ENCODE measurements at regions of chr4 and their contacts with region 1.

Region 1: GRCh38 chr4:75673027-75673958 is at the start of gene G3BP2:
- DNase-seq: peak; percentile 93 to 97
- H3K4me3 ChIP-seq: peak within 1 kb of the TSS; percentile 92 to 99 (median 94)
- H3K27ac ChIP-seq: peak within 1 kb of the TSS; percentile 94
- H3K4me1 ChIP-seq: peaks cover 6 to 11% (median 7%) of the 10 kb centered on the region in 4 experiments
- H3K27me3 ChIP-seq: no peaks in the 10 kb centered on the region
- CTCF ChIP-seq: no peak
- EP300 ChIP-seq: no peak
- POLR2A ChIP-seq: peak; percentile 75 to 95
- RAD21 ChIP-seq: no peak
- total RNA-seq, gene G3BP2: 378 and 388 TPM in 2 replicates

Region 2: GRCh38 chr4:75605928-75606327 is 67.4 kb before region 1 on chr4:
- CTCF ChIA-PET with region 1: no interaction called
- POLR2A ChIA-PET with region 1: no interaction called
- DNase-seq: no peak
- H3K4me3 ChIP-seq: no peak overlapping the region
- H3K27ac ChIP-seq: no peak overlapping the region
- H3K4me1 ChIP-seq: no peaks in the 10 kb centered on the region
- H3K27me3 ChIP-seq: no peaks in the 10 kb centered on the region
- CTCF ChIP-seq: no peak
- EP300 ChIP-seq: no peak
- POLR2A ChIP-seq: no peak
- RAD21 ChIP-seq: no peak

Region 3: GRCh38 chr4:75708218-75708691 is 35.0 kb after region 1 on chr4:
- CTCF ChIA-PET with region 1: interaction called, 6 read pairs
- POLR2A ChIA-PET with region 1: interaction called, 16 read pairs
- DNase-seq: peak in 1 of 2 experiments; percentile 50
- H3K4me3 ChIP-seq: no peak overlapping the region
- H3K27ac ChIP-seq: peak overlapping the region; percentile 8; the same call in 1 of the 2 replicates
- H3K4me1 ChIP-seq: peaks cover 8 to 16% (median 12%) of the 10 kb centered on the region in 4 experiments; a peak in 6 of 7 replicates
- H3K27me3 ChIP-seq: no peaks in the 10 kb centered on the region
- CTCF ChIP-seq: peak in 2 of 3 experiments; percentile 63 to 75; a peak in 3 of 4 replicates
- EP300 ChIP-seq: no peak
- POLR2A ChIP-seq: no peak
- RAD21 ChIP-seq: peak; percentile 74 to 78

Region 4: DNA sequence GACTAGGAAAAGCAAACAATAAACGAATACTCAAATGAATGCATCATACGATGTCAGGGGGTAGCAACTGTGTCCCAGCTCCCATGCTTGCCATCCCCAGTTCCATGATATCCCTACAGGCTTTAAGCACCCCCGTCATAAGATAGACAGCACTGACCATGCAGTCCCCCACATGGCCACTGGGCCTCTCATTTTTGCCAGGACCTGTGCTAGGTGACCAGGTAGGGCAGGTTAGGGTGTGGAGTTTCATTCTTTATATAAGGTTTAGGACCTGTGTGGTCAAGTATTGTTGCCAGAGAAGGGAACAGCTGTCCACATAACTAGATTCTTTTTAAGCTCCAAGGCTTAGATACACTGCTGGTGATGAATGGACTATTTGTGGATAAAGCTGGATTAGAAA is 219.2 kb after region 1 on chr4:
- CTCF ChIA-PET with region 1: no interaction called
- POLR2A ChIA-PET with region 1: no interaction called
- DNase-seq: no peak
- H3K4me3 ChIP-seq: no peak overlapping the region
- H3K27ac ChIP-seq: no peak overlapping the region
- H3K4me1 ChIP-seq: no peaks in the 10 kb centered on the region
- H3K27me3 ChIP-seq: no peaks in the 10 kb centered on the region
- CTCF ChIP-seq: peak in 2 of 3 experiments; percentile 58 to 60; a peak in 3 of 4 replicates
- EP300 ChIP-seq: no peak
- POLR2A ChIP-seq: no peak
- RAD21 ChIP-seq: peak in 1 of 2 experiments; percentile 41; a peak in 2 of 4 replicates

Measured in H1 (cell line).